Activated T-helper 1 cell treated with anti-CD3 and anti-CD28 coated beads, Interleukin-12 subunit alpha, Interleukin-12 subunit beta, Interleukin-2, Interleukin-4 antibody, amounts not matched to agents 30 ng/mL and 10 ng/mL and 1 ng/mL, durations not matched to agents 14 hours and 24 hours and 36 hours (primary cell): ENCODE measurements at regions of chr2 and their contacts with region 1.

Region 1: DNA sequence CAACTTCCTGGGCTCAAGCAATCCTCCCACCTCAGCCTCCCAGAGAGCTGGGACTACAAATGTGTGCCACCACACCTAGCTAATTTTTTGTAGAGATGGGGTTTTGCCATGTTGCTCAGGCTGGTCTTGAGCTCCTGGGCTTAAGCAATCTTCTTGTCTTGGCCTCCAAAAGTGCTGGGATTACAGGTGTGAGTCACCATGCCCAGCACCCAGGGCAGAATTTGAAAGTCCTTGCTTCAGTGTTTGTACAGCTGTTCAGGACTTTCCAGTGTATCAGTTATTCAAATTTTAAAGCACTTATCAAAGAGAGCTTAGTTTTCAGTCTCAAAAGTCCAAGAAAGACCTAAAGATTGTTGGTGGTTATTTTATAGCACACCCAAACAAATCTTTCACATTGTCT is 43.6 kb upstream of the VPS54 start:
- DNase-seq: no peak
- H3K4me3 Mint-ChIP-seq: no peak overlapping the region
- H3K27ac Mint-ChIP-seq: peak overlapping the region; percentile 18
- H3K4me1 Mint-ChIP-seq: peaks cover 34% of the 10 kb centered on the region
- H3K27me3 Mint-ChIP-seq: no peaks in the 10 kb centered on the region

Region 2: GRCh38 chr2:64094663-64095382 is 32.0 kb after region 1 on chr2:
- intact Hi-C with region 1: loop called (anchors 5 kb)
- DNase-seq: no peak
- H3K4me3 Mint-ChIP-seq: no peak overlapping the region
- H3K27ac Mint-ChIP-seq: no peak overlapping the region
- H3K4me1 Mint-ChIP-seq: peaks cover 38% of the 10 kb centered on the region
- H3K27me3 Mint-ChIP-seq: no peaks in the 10 kb centered on the region